ENCODE measurements at regions of chr11 and their contacts with region 1.

Region 1: DNA sequence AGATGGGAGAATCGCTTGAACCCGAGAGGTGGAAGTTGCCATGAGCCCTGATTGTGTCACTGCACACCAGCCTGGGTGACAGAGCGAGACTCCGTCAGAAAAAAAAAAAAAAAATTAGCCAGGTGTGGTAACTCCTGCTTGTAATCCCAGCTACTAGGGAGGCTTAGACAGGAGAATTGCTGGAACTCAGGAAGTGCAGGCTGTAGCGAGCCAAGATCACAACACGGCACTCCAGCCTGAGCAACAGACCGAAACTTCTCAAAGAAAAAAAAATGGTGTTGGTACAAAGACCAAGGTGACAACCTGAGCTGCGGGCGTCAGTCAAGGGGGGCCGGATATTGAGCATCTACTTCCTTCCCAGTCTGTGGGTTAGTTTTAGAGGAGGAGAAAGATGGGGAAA is 48.4 kb upstream of the HSPA8 start:
- DNase-seq: no peak
- ATAC-seq: no peak
- H3K4me3 ChIP-seq: no peak overlapping the region
- H3K4me1 ChIP-seq: peaks cover 4% of the 10 kb centered on the region
- CTCF ChIP-seq: no peak

Region 2: DNA sequence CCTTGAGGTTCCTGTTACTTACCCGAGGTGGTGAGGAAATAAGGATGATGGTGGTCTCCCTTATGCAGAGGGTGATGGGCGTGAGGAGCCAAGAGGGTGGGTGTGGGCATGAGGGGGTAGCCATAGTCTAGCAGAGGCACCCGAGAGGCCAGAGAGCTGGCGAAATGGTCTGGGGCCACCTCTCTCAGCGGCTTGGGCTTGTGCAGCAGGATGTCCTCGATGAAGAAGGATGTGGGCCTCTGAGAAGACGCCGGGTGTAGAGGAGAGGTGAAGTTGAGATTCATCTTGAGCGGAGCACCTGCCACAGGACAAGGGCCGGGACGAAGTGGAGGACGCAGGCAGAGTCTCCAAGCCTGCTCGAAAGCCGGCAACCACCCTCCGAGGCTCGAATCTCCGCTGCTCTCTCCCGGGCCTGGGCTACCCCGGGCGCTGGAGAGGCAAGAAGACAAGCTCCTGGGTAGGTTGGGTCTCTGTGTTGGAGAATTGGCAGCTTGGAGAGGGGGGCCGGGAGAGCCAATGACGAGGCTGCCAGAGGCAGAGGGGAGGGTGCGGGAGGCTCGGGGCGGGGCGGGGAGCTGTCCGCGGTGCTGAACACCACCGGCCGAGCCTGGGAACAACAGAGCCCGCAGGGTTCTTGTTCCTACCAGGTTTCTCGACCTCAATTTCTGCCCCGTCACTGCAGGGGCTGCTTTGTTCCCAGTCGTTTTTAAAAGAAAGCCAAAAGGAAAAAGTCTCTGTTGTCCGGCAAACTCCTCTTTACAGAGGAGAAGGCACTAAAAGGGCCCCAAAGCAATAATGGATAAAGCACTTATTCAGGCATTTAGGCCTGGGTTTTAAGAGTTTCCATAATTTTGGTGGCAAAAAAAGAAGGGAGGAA is 128.7 kb before region 1 on chr11 and contains the start of gene BSX:
- intact Hi-C with region 1: no loop called
- DNase-seq: peak in 2 of 3 donors; percentile 47 to 53
- ATAC-seq: peak; percentile 80
- H3K4me3 ChIP-seq: no peak within 1 kb of the TSS
- H3K4me1 ChIP-seq: peaks cover 10% of the 10 kb centered on the region
- CTCF ChIP-seq: no peak
- total RNA-seq, gene BSX: not detected

Region 3: DNA sequence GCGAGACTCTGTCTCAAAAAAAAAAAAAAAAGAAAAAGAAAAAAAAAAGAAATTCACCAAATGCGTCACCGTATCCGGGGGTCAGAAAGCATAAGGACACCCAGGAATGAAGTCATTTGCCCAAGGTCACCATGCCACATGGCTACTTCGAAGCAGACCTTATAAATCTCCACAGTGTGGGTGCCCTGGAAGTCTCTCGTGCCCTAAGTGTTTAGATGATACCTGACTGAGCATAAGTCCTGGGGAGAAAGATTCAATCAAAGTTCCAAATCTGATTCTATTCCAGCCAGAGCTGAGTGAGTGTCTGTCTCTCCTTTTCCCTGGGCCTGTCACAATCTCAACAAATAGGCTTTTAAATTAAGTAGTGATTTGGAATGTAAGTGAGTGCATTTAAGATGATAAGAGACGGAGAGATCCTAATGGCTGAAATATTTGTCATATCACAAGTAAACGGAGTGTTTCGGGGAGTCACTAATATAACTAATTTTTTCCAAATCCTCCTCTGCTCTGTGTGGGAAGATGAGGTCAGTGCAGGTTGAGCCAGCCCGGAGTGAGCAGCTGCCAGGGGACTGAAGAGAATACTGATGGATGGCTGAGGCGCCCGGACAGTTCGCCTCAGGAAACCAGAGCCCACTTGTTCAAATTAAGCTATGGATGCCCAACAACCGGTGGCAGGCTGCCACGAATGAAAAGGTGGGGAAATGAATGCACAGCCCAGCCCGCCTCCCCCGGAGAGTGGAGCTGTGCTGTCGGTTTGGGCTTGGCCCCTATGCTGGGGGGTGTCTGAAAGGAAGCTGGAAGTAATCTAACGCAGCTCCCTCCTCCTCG is 70.5 kb before region 1 on chr11:
- intact Hi-C with region 1: no loop called
- DNase-seq: no peak
- ATAC-seq: no peak
- H3K4me3 ChIP-seq: no peak overlapping the region
- H3K4me1 ChIP-seq: no peaks in the 10 kb centered on the region
- CTCF ChIP-seq: no peak

Region 4: DNA sequence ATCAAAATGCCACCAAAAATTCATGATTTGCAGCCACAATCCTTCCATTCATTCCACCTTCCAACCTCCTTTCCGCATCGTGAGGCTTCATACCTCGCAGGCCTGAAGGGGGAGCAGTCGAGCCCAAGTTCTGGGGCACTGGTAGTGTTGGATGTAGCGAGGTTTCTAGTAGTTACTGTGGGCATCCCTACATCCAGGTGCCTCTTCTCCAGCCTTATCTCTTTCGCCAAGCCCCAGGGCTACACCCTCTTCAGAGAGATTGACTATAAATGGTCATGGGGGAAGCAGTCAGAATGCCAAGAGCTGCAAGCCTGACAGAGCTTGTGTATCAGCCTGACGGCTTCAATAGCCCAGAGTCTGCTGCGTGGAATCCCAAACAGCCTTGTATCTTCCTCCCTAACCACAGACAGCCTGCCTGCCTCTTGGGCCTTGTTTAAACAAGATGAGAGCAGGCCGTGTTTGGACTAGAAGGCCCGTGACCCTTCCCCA is 55.8 kb after region 1 on chr11:
- intact Hi-C with region 1: loop called in 1 of 2 experiments (anchors 10 kb)
- DNase-seq: peak in 2 of 3 donors; percentile 70 to 71
- ATAC-seq: peak; percentile 67
- H3K4me3 ChIP-seq: no peak overlapping the region
- H3K4me1 ChIP-seq: no peaks in the 10 kb centered on the region
- CTCF ChIP-seq: peak; percentile 28

Region 5: DNA sequence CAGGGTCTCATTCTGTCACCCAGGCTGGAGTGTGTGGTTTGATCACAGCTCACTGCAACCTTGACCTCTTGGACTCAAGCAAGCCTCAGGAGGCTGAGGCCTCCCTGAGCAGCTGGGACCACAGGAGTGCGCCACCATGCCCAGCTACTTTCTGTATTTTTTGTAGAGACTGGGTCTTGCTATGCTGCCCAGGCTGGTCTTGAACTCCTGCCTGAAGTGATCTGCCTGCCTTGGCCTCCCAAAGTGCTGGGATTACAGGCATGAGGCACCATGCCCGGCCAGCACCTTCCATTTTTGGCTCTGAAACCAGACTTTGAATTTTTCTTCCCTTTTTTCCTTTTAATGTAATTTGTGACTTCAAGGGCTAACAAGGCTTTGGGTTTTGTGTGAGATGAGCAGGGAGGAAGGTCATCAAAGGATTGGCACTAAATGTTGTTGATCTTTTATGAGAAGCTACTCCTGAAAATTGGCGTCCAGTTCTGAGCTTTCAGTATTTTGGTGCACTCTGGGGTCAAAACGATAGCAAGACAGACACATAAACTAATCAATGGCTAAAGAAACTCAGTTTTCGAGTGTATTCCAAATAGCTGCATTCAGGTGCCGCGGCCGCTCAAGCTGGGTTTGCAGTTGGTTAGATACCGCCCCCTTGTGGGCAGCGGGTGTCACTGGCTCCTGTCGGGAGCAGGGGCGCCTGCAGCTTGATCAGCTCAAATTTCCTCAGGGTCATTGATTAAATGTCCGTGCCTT is 136.6 kb after region 1 on chr11:
- intact Hi-C with region 1: loop called (anchors 2 kb)
- DNase-seq: peak; percentile 72 to 88 (median 84)
- ATAC-seq: peak; percentile 94
- H3K4me3 ChIP-seq: no peak overlapping the region
- H3K4me1 ChIP-seq: no peaks in the 10 kb centered on the region
- CTCF ChIP-seq: peak; percentile 96

Region 6: GRCh38 chr11:123362941-123363340 is 252.6 kb after region 1 on chr11:
- intact Hi-C with region 1: no loop called
- DNase-seq: no peak
- ATAC-seq: no peak
- H3K4me3 ChIP-seq: no peak overlapping the region
- H3K4me1 ChIP-seq: no peaks in the 10 kb centered on the region
- CTCF ChIP-seq: no peak